ENCODE measurements at regions of chr6 and their contacts with region 1.

Region 1: GRCh38 chr6:23002044-23002619 is 432.8 kb downstream of the HDGFL1 start:
- DNase-seq: no peak
- H3K4me3 ChIP-seq: no peak overlapping the region
- H3K27ac ChIP-seq: no peak overlapping the region
- H3K4me1 ChIP-seq: no peaks in the 10 kb centered on the region
- H3K27me3 ChIP-seq: no peaks in the 10 kb centered on the region
- CTCF ChIP-seq: no peak

Region 2: DNA sequence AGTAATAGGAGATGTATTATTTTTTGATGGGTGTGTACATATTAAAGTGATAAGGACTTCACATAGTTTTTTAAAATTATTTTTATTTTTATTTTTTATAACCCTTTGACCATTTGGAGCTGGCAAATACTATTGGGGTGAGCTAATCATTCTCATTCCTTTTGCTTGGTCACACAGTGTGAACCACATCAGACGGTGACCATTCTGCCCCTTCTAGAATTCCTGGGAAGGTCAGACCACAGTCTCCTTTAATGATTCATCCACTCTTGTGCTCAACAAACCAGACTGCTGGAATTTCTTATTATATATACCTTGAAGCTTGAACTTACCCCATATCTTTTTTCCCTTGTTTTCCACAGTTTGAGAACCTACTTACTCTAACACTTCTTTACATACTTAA is 681.4 kb before region 1 on chr6:
- CTCF ChIA-PET with region 1: no interaction called
- POLR2A ChIA-PET with region 1: interaction called, 11 read pairs
- intact Hi-C with region 1: no loop called
- DNase-seq: peak; percentile 34 to 64
- H3K4me3 ChIP-seq: no peak overlapping the region
- H3K27ac ChIP-seq: no peak overlapping the region
- H3K4me1 ChIP-seq: peaks cover 16% of the 10 kb centered on the region
- H3K27me3 ChIP-seq: no peaks in the 10 kb centered on the region
- CTCF ChIP-seq: no peak